Left colon (tissue), 2 donors: ENCODE measurements at regions of chr9 and their contacts with region 1.

Region 1: DNA sequence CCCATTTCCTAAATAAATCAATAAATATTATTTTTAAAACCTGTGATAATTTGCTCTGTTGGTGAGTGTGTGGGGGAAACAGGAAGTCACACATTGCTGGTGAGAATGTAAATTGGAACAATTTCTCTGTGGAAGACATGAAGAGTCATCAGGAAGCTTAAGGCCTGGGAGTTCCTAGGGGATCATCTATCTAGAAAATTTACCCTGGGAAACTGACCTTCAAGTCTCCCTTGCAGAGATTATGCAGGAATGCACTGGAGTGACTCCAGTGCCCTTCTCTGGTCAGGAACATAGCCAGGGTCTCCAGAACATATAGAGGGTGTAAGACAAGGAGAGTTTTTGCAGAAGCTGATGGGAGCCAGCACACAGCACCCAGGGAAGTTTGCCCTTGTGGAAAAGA is 13.0 kb upstream of the GCNT1 start:
- DNase-seq: no peak
- ATAC-seq: no peak

Region 2: GRCh38 chr9:76658535-76659231 is 212.7 kb after region 1 on chr9:
- intact Hi-C with region 1: loop called in 1 of 2 experiments (anchors 5 kb)
- DNase-seq: no peak
- ATAC-seq: peak; percentile 93

Region 3: DNA sequence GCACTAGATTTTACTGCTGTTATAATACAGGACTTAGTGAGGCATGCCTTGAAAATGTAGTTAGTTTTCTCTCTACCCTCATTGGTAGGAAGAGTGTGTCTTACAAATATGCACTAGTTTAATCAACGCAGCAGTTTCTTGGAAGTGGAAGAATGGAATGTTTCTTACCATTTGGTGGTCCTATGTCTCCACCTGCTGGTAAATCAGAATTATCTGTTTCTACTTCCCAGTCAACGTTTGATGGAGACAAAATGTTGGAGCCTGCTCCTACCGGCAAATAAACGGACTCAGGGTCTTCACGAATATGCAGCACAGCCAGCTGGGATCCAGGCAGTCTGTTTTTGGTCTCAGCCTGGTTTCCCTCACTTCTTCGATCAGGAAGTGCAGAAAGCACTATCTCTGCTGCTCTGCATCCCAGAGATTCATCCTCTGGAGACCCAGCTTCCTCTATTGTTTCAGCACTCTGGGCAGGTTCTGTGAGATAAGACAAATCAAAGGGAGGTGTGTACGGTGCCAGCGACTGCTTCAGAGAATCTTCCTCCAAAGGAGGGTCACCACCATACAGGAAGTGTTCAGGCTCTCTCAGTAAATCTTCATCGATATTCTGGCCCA is 258.7 kb after region 1 on chr9:
- intact Hi-C with region 1: loop called in 1 of 2 experiments (anchors 5 kb)
- DNase-seq: no peak
- ATAC-seq: peak; percentile 74

Region 4: DNA sequence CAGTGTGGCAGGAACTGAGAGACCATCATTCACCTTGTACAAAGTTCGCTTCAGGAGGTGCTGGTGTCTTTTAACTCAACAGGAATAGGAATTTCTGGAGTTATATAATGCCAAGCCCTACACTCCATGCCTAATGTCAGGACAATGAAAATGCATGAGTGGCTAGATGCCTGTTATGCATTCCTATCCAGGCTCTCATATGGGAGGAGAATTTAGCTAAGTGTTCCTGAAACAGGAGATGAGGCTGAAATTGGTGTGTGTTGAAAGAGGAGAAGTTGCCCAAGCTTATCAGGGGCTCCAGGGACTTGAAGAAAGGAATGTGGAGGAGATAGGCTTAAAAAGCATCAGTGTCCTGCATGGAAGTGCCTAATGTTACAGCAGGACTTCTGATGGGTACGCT is 486.8 kb after region 1 on chr9:
- intact Hi-C with region 1: no loop called
- DNase-seq: no peak
- ATAC-seq: no peak

Region 5: GRCh38 chr9:77149879-77150278 is 703.9 kb after region 1 on chr9:
- intact Hi-C with region 1: loop called in 1 of 2 experiments (anchors 5 kb)
- DNase-seq: no peak
- ATAC-seq: no peak